ENCODE measurements at regions of chr11 and their contacts with region 1.

Region 1: GRCh38 chr11:10540923-10541560 is at the start of gene RNF141:
- DNase-seq: peak; percentile 81 to 98 (median 92)
- ATAC-seq: peak; percentile 97 to 99 (median 98)
- H3K4me3 ChIP-seq: peak within 1 kb of the TSS; percentile 82 to 86
- H3K4me3 Mint-ChIP-seq: peak within 1 kb of the TSS; percentile 87 to 91 (median 87)
- H3K27ac ChIP-seq: peak within 1 kb of the TSS; percentile 78
- H3K27ac Mint-ChIP-seq: peak within 1 kb of the TSS; percentile 75 to 86
- H3K4me1 ChIP-seq: peaks cover 2 to 12% of the 10 kb centered on the region in 2 experiments
- H3K4me1 Mint-ChIP-seq: peaks cover 22 to 37% (median 30%) of the 10 kb centered on the region in 3 donors
- H3K27me3 ChIP-seq: peaks cover 0 to 13% of the 10 kb centered on the region in 2 experiments
- H3K27me3 Mint-ChIP-seq: no peaks in the 10 kb centered on the region
- total RNA-seq, gene RNF141: 15.1 to 17.3 (median 15.3) TPM

Region 2: GRCh38 chr11:10394229-10395101 is 146.6 kb before region 1 on chr11:
- CTCF ChIA-PET with region 1: no interaction called
- POLR2A ChIA-PET with region 1: no interaction called
- DNase-seq: no peak
- ATAC-seq: no peak
- H3K4me3 ChIP-seq: no peak overlapping the region
- H3K4me3 Mint-ChIP-seq: no peak overlapping the region
- H3K27ac ChIP-seq: no peak overlapping the region
- H3K27ac Mint-ChIP-seq: no peak overlapping the region
- H3K4me1 ChIP-seq: no peaks in the 10 kb centered on the region
- H3K4me1 Mint-ChIP-seq: peaks cover 0 to 7% (median 0%) of the 10 kb centered on the region in 3 donors
- H3K27me3 ChIP-seq: peaks cover 0 to 24% of the 10 kb centered on the region in 2 experiments
- H3K27me3 Mint-ChIP-seq: peaks cover 30 to 33% of the 10 kb centered on the region in 2 donors

Region 3: DNA sequence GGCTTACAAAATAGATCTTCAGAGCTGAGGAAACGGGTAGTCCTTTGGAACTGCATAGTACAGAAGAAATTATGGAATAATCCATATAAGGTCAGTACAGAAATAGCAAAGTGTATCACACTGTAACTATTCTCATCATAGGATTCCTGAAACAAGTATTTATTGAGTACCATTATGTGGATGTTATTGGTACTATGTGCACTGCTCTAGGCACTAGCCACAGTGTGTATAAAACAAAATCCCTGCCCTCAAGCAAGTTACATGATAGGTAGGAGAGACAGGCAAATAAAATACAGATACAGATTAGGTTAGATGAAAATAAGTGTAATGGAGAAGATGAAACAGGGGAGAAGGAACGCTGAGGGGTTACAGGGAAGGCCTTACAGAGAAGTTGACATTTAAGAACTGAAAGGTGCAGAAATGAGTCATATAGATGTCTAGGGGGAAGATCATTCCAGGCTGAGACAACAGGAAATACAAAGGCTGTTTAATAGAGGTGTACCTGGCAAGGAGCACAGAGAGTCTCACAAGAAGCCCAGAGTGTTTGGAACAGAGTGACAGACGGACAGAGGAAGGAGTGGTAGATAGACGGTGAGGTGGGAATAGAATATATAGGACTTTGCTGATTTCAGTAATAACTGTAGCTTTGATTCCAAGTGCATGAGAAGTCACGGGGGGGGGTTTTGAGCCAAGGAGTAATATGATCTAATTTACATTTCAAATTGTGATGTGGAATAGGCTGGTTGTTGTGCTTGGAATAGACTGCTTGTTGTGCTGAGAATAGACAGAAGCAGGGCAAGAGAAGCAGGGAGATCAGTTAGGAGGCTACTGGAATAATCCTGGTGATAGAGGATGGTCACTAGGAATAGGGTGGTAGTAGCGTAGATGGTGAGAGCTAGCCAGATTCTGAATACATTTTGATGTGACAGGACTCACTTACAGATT is 13.8 kb before region 1 on chr11:
- CTCF ChIA-PET with region 1: interaction called in 1 of 2 experiments, 14 read pairs
- POLR2A ChIA-PET with region 1: interaction called, 3 to 13 read pairs
- DNase-seq: no peak
- ATAC-seq: peak in 3 of 4 experiments; percentile 81 to 88 (median 84)
- H3K4me3 ChIP-seq: no peak overlapping the region
- H3K4me3 Mint-ChIP-seq: peak overlapping the region in 1 of 3 donors; percentile 2
- H3K27ac ChIP-seq: no peak overlapping the region
- H3K27ac Mint-ChIP-seq: peak overlapping the region; percentile 18 to 58
- H3K4me1 ChIP-seq: no peaks in the 10 kb centered on the region
- H3K4me1 Mint-ChIP-seq: peaks cover 6 to 17% (median 14%) of the 10 kb centered on the region in 3 donors
- H3K27me3 ChIP-seq: no peaks in the 10 kb centered on the region
- H3K27me3 Mint-ChIP-seq: no peaks in the 10 kb centered on the region

Measured in T-cell (primary cell).